Sigmoid colon (tissue), 7 donors: ENCODE measurements at regions of chr17 and their contacts with region 1.

Region 1: DNA sequence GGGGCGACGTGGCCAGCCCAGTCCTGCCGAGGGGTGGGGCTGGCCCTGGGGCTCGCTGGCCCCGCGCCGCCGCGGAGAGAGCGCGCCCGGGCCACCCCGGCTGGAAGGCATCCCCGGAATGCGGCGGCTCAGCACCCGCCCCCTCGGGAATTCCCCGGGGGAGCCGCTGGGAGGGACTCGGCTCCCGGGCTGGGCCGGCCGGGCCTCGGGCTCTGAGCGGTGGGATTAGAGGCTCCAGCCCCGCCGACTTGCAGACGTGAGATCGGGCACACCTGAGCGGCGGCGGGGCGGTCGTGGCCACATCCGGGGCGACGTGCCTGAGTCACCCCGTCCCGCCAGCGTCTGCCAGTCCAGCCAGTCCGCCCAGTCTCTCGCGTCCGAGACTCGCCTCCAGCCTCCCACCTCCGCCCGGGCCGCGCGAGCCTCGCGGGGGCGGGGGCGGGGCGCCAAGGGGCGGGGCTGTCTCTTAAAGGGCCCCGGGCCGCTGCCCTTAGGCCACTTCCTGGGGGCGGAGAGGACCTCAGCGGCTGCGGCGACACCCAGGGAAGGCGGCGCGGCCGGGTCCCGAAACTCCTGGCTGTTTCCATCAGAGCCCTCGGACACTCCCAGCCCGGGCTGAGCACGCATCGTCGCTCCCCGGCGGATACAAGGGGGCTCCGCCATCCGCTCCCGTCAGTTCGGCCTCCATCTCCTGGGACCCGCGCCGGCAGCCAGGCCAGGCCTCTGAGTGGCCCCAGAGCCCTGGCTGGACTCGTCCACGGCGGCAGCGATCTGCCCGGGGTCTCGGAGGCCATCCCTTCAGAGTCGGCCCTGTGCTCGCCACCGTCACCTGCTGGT is at the start of gene KCTD11:
- DNase-seq: peak; percentile 95
- H3K4me3 ChIP-seq: peak within 1 kb of the TSS; percentile 71 to 91 (median 86)
- H3K27ac ChIP-seq: peak within 1 kb of the TSS; percentile 93 to 100 (median 98)
- H3K4me1 ChIP-seq: peaks cover 0 to 66% (median 50%) of the 10 kb centered on the region in 4 donors
- H3K27me3 ChIP-seq: no peaks in the 10 kb centered on the region
- CTCF ChIP-seq: no peak
- EP300 ChIP-seq: peak in 1 of 4 donors; percentile 23
- POLR2A ChIP-seq: peak; percentile 36 to 53
- total RNA-seq, gene KCTD11: 4.4 to 6.4 (median 5.5) TPM

Region 2: GRCh38 chr17:7280519-7281429 is 71.1 kb before region 1 on chr17:
- intact Hi-C with region 1: loop called (anchors 2 kb)
- DNase-seq: peak; percentile 91
- H3K4me3 ChIP-seq: peak overlapping the region; percentile 15 to 83 (median 68)
- H3K27ac ChIP-seq: peak overlapping the region; percentile 93 to 98 (median 96)
- H3K4me1 ChIP-seq: peaks cover 0 to 46% (median 38%) of the 10 kb centered on the region in 4 donors
- H3K27me3 ChIP-seq: no peaks in the 10 kb centered on the region
- CTCF ChIP-seq: peak; percentile 88 to 98 (median 94)
- EP300 ChIP-seq: peak in 2 of 4 donors; percentile 18 to 62
- POLR2A ChIP-seq: no peak

Region 3: DNA sequence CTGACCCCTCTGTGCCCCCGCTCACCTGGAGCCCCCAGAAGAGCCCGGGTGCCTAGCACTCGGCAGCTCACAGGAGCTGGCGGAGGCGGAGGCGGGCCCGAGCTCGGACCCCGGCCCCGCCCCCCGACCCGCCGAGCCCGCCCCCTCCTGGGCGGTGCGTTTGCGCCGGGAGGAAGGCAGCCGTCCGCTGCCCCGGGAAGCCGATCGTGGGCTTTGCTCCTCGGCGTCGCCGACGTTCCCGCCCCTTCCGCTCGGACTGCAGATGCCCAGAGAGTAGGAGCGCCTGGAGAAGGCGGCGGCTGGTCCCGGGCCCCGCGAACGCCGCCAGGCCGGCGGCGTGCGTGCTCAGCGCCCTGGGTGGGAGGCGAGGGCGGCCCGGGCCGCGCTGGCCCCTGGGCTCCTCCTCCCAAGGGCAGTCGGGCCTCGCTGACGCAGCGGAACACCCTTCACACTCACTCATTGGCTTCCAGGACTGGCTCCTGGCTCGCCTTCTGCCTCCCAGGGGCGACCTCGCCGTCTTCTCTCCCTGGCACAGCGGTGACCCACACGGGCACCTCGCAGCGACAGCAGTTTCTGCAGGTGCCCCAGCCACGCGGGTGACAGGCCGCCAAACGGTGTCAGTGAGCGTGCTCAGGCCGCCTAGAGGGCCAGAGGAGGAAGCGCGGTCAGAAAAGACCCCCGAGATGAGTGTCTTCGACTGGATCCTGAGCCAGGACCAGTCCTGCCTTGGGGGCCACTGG is 42.7 kb after region 1 on chr17 and contains the start of gene PLSCR3:
- intact Hi-C with region 1: loop called (anchors 2 kb)
- DNase-seq: peak; percentile 93
- H3K4me3 ChIP-seq: peak within 1 kb of the TSS; percentile 68 to 79 (median 70)
- H3K27ac ChIP-seq: peak within 1 kb of the TSS; percentile 89 to 93 (median 90)
- H3K4me1 ChIP-seq: peaks cover 0 to 25% (median 19%) of the 10 kb centered on the region in 4 donors
- H3K27me3 ChIP-seq: no peaks in the 10 kb centered on the region
- CTCF ChIP-seq: peak in 3 of 4 experiments; percentile 10 to 56 (median 51)
- EP300 ChIP-seq: no peak
- POLR2A ChIP-seq: peak in 1 of 2 donors; percentile 61
- total RNA-seq, gene PLSCR3: 10.4 to 18.3 (median 14.2) TPM

Region 4: GRCh38 chr17:7436351-7437206 is 84.7 kb after region 1 on chr17:
- intact Hi-C with region 1: loop called (anchors 1 kb)
- DNase-seq: peak; percentile 87
- H3K4me3 ChIP-seq: peak overlapping the region in 3 of 4 donors; percentile 32 to 43 (median 37)
- H3K27ac ChIP-seq: peak overlapping the region; percentile 44 to 73 (median 58)
- H3K4me1 ChIP-seq: peaks cover 0 to 58% (median 51%) of the 10 kb centered on the region in 4 donors
- H3K27me3 ChIP-seq: peaks cover 44 to 71% (median 70%) of the 10 kb centered on the region in 3 donors
- CTCF ChIP-seq: peak; percentile 23 to 86 (median 68)
- EP300 ChIP-seq: no peak
- POLR2A ChIP-seq: no peak

Region 5: GRCh38 chr17:7589204-7589868 is 237.5 kb after region 1 on chr17:
- intact Hi-C with region 1: loop called (anchors 2 kb)
- DNase-seq: peak; percentile 94
- H3K4me3 ChIP-seq: peak overlapping the region; percentile 61 to 73 (median 69)
- H3K27ac ChIP-seq: peak overlapping the region; percentile 82 to 90 (median 86)
- H3K4me1 ChIP-seq: peaks cover 0 to 46% (median 39%) of the 10 kb centered on the region in 4 donors
- H3K27me3 ChIP-seq: no peaks in the 10 kb centered on the region
- CTCF ChIP-seq: peak; percentile 72 to 89 (median 88)
- EP300 ChIP-seq: no peak
- POLR2A ChIP-seq: peak in 1 of 2 donors; percentile 13